Thyroid gland (tissue), 4 donors: ENCODE measurements at regions of chr17 and their contacts with region 1.

Region 1: GRCh38 chr17:7823581-7824397 is 10.2 kb upstream of the KDM6B start:
- DNase-seq: no peak
- H3K4me3 ChIP-seq: no peak overlapping the region
- H3K27ac ChIP-seq: no peak overlapping the region
- H3K4me1 ChIP-seq: no peaks in the 10 kb centered on the region
- H3K27me3 ChIP-seq: no peaks in the 10 kb centered on the region
- CTCF ChIP-seq: no peak
- POLR2A ChIP-seq: no peak

Region 2: DNA sequence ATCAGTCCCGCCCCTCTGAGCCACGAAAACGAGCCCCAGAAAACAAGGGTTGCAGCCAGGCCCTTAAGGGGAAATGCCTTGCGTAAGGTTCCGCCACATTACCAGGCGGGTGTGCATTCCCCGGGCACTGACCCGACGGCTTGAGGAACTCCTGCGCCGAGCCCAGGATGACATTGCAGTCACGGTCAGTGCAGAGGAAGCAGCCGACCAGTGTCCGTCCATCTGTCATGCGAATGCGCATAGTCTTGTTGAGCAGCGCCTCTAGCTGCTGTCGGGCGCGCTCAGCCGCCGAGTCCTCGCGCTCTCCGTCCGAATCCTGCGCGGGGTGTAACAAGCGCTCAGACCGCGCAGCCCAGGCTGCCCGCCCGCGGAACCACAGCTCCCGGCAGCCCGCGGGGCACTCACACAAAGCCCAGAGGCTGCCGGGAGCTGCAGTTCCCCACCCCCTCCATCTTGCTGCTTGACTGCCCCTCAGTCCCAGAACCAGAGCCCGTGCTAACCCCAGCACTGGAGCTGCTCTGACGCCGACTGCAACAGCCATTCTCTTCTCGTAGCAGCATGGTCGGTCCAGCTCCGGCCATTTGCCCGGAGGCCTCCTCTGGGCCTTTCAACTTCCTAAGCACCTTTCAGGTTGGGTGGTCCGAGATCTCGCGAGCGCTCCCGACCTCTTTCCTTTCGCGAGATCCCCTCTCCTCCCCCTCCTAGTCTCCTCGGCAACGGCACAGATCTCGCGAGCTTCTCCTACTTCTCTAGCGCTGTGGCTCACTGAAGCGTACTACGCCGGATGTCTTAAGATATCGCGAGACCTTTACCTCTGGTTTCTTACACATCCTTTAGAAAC is 33.3 kb after region 1 on chr17 and contains the start of gene NAA38:
- intact Hi-C with region 1: loop called (anchors 5 kb)
- DNase-seq: peak; percentile 98
- H3K4me3 ChIP-seq: peak within 1 kb of the TSS; percentile 41 to 93 (median 50)
- H3K27ac ChIP-seq: peak within 1 kb of the TSS; percentile 68 to 92 (median 88)
- H3K4me1 ChIP-seq: peaks cover 22 to 30% of the 10 kb centered on the region in 2 donors
- H3K27me3 ChIP-seq: no peaks in the 10 kb centered on the region
- CTCF ChIP-seq: peak in 4 of 6 experiments; percentile 25 to 41 (median 30)
- POLR2A ChIP-seq: peak in 1 of 2 donors; percentile 46
- total RNA-seq, gene NAA38: 24.6 to 180 (median 79.6) TPM